ENCODE measurements at regions of chr2 and their contacts with region 1.

Region 1: GRCh38 chr2:132521341-132521740 is 104.7 kb downstream of the GPR39 start:
- DNase-seq: no peak
- H3K4me3 ChIP-seq: no peak overlapping the region
- H3K27ac ChIP-seq: no peak overlapping the region
- H3K4me1 ChIP-seq: peaks cover 7% of the 10 kb centered on the region; the same call in 1 of the 2 replicates
- H3K27me3 ChIP-seq: no peaks in the 10 kb centered on the region
- CTCF ChIP-seq: no peak

Region 2: DNA sequence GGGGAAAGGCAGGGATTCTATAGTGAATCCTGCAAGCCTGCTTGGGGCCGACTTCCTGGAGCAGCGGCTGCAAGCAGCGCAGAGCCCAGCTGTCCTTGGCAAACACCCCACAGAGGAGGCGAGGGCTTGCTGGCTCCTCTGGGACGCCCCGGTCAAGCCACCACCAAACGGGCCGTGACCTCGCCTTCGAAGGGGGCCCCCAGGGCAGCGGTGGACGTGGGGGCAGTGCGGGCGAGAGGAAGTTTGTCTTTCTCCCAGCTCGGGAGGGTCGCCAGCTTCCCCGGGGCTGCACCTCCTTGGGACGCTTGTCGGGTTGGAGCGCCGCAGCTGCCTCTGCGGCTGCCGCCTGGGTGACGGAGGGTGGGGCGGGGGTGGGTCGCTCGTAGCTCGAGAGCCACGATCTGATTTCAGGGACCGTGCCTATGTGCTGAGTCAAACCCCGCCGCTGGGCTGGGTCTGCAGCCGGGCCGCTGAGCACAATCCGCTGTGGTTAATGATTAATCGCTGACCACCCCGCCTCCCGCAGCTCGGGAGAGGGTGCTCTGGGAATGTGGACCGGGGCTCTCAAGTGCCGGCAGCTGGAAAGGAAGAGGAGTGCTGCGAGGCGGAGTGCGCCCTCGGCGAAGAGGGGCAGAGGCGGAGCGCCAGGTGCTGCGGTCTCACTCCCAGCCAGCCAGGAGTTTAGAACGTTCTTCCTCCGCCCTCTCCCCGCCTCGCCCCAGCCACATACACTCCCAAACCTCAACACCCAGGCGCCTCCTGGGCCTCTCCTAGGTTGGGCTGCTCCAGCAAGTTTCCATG is 105.1 kb before region 1 on chr2 and contains the start of gene GPR39:
- CTCF ChIA-PET with region 1: no interaction called
- POLR2A ChIA-PET with region 1: no interaction called
- intact Hi-C with region 1: no loop called
- DNase-seq: peak; percentile 97
- H3K4me3 ChIP-seq: peak within 1 kb of the TSS; percentile 73
- H3K27ac ChIP-seq: peak within 1 kb of the TSS; percentile 95
- H3K4me1 ChIP-seq: peaks cover 49% of the 10 kb centered on the region
- H3K27me3 ChIP-seq: no peaks in the 10 kb centered on the region
- CTCF ChIP-seq: no peak
- total RNA-seq, gene GPR39: 14.1 and 20.9 TPM in 2 replicates

Region 3: DNA sequence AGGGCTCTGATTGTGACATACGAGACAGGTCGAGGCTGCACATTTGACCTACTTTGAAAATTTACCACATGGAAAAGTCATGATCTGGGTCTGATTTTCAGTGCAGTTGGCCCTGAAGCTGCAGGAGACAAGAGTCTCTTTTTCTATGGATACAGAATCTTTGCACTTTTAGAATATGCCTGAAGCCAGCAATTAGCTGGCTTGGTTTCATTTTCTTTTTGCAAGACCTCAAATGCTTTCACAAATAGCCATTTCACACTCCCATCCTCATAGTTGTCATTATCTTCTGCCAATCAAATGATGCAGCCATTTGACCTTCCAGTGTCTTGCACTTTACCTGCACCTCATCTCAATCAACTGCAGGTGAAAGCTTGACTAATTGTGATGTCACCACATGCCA is 45.7 kb before region 1 on chr2:
- CTCF ChIA-PET with region 1: no interaction called
- POLR2A ChIA-PET with region 1: no interaction called
- intact Hi-C with region 1: loop called (anchors 2 kb)
- DNase-seq: no peak
- H3K4me3 ChIP-seq: no peak overlapping the region
- H3K27ac ChIP-seq: no peak overlapping the region
- H3K4me1 ChIP-seq: no peaks in the 10 kb centered on the region
- H3K27me3 ChIP-seq: no peaks in the 10 kb centered on the region
- CTCF ChIP-seq: no peak

Region 4: GRCh38 chr2:132538317-132538855 is 17.0 kb after region 1 on chr2:
- CTCF ChIA-PET with region 1: no interaction called
- POLR2A ChIA-PET with region 1: no interaction called
- intact Hi-C with region 1: no loop called
- DNase-seq: no peak
- H3K4me3 ChIP-seq: no peak overlapping the region
- H3K27ac ChIP-seq: no peak overlapping the region
- H3K4me1 ChIP-seq: peaks cover 18% of the 10 kb centered on the region
- H3K27me3 ChIP-seq: no peaks in the 10 kb centered on the region
- CTCF ChIP-seq: no peak

Region 5: DNA sequence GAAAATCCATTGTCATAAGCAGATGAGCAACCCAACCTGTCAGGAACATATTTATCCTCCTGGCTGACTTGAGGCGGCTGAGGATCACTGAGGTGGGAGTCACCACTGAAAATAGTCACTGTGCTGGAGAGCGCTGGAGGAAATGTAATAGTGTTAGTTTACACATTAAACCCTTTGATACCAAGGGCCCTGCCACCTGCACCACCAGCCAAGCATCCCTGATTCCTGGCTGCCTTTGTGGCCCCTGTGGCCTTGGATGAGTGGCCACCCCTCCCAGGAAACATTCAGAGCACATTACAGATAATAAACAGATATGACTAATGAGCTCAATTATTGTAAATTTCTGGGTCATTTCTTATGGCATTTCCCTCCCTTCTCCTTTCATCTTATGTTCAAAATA is 42.7 kb after region 1 on chr2:
- CTCF ChIA-PET with region 1: no interaction called
- POLR2A ChIA-PET with region 1: no interaction called
- intact Hi-C with region 1: no loop called
- DNase-seq: no peak
- H3K4me3 ChIP-seq: no peak overlapping the region
- H3K27ac ChIP-seq: no peak overlapping the region
- H3K4me1 ChIP-seq: no peaks in the 10 kb centered on the region
- H3K27me3 ChIP-seq: no peaks in the 10 kb centered on the region
- CTCF ChIP-seq: no peak

Region 6: GRCh38 chr2:132662732-132663131 is 141.4 kb after region 1 on chr2:
- CTCF ChIA-PET with region 1: no interaction called
- POLR2A ChIA-PET with region 1: no interaction called
- intact Hi-C with region 1: no loop called
- DNase-seq: no peak
- H3K4me3 ChIP-seq: no peak overlapping the region
- H3K27ac ChIP-seq: no peak overlapping the region
- H3K4me1 ChIP-seq: no peaks in the 10 kb centered on the region
- H3K27me3 ChIP-seq: no peaks in the 10 kb centered on the region
- CTCF ChIP-seq: no peak